Thyroid gland (tissue), 4 donors: ENCODE measurements at regions of chr14 and their contacts with region 1.

Region 1: DNA sequence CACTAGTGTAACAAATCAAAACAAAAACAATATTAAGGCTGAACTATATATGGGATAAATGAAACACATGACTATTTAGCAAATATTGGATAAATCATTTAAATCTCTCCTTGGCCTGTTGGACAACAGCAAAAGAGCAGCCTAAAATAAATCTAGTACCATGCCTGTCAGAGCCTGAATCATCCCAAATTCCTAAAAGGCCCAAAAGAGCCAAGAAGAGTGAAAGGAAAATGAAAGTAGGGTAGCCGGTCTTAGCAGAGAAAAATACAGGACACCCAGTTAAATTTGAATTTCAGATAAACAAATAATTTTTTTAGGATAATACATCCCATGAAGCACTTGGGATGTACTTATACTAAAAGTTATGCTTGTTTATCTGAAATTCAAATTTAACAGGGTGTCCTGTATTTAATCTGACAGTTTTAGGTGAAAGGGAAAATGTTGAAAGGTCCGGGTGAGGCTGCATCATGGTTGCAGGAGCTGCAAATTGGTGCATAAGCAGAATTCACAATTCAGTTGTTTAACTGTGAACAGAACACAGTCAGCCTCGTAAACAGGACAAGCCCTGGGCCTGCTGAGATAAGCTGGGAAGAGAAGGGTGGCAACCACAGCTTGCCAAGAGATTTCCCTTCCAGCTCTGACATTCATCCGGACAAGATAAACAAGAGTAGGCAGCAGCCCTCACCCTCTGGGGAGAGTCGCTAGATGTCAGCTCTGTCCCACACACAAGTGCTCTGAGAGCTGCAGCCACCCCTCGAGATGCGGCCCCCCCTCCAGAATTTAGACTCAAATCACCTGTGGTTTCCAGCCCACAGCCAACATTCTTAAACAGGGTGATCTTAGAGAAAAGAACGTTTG is 30.3 kb downstream of the DMAC2L start:
- DNase-seq: peak; percentile 64 to 75
- H3K4me3 ChIP-seq: no peak overlapping the region
- H3K27ac ChIP-seq: peak overlapping the region; percentile 39 to 71 (median 56)
- H3K4me1 ChIP-seq: peaks cover 30 to 38% of the 10 kb centered on the region in 2 donors
- H3K27me3 ChIP-seq: no peaks in the 10 kb centered on the region
- CTCF ChIP-seq: peak in 4 of 6 experiments; percentile 43 to 57 (median 46)
- POLR2A ChIP-seq: no peak

Region 2: DNA sequence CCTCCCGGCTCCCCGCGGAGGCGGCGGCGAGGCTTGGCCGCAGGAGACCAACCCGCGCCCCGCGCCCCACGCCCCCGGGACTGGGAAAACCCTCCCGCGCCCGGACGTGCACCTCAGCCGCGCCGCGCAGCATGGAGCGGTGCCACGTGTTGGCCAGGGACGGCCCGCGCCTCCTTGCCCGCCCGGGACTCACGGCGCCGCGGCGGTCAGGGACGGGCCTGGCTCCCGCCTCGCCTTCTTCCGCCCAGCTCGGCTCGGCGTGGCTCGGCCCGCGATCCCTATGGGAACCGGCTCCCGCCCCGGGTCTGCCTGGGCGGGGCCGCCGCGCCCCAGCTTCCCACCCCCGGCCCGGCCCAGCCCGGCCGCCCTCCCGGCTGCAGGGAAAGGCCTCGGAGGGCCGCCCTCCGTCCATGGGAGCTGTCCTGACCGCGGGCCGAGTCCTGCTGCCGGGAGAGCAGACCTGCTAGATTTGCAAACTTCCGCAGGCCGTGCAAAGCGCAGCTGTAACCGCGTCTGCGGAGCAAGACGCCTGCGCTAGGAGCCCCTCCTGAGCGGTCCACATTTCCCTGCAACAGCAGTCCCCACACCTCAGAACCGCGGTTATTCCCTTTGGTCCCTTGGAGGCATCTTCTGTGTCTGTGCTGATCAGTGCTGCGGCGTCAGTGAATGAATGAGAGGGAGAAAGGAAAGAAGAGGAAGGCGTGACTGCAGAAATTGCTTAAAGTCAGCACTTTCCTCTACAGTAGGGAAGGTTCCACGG is 54.4 kb after region 1 on chr14 and contains the start of gene CDKL1:
- intact Hi-C with region 1: loop called (anchors 10 kb)
- DNase-seq: peak; percentile 72 to 75
- H3K4me3 ChIP-seq: peak within 1 kb of the TSS; percentile 10 to 67 (median 53)
- H3K27ac ChIP-seq: peak within 1 kb of the TSS; percentile 83 to 95 (median 91)
- H3K4me1 ChIP-seq: peaks cover 35 to 44% of the 10 kb centered on the region in 2 donors
- H3K27me3 ChIP-seq: no peaks in the 10 kb centered on the region
- CTCF ChIP-seq: peak in 1 of 6 experiments; percentile 5
- POLR2A ChIP-seq: peak in 1 of 2 donors; percentile 87
- total RNA-seq, gene CDKL1: 18.6 to 37.9 (median 35.5) TPM

Region 3: GRCh38 chr14:50447461-50447860 is 105.0 kb after region 1 on chr14:
- intact Hi-C with region 1: no loop called
- DNase-seq: no peak
- H3K4me3 ChIP-seq: no peak overlapping the region
- H3K27ac ChIP-seq: peak overlapping the region in 1 of 3 donors; percentile 13
- H3K4me1 ChIP-seq: no peaks in the 10 kb centered on the region
- H3K27me3 ChIP-seq: no peaks in the 10 kb centered on the region
- CTCF ChIP-seq: no peak
- POLR2A ChIP-seq: no peak

Region 4: GRCh38 chr14:50520947-50521815 is 178.7 kb after region 1 on chr14:
- intact Hi-C with region 1: no loop called
- DNase-seq: no peak
- H3K4me3 ChIP-seq: no peak overlapping the region
- H3K27ac ChIP-seq: peak overlapping the region in 2 of 3 donors; percentile 6
- H3K4me1 ChIP-seq: peaks cover 0 to 19% of the 10 kb centered on the region in 2 donors
- H3K27me3 ChIP-seq: no peaks in the 10 kb centered on the region
- CTCF ChIP-seq: no peak
- POLR2A ChIP-seq: no peak